ENCODE measurements at regions of chr3 and their contacts with region 1.

Region 1: DNA sequence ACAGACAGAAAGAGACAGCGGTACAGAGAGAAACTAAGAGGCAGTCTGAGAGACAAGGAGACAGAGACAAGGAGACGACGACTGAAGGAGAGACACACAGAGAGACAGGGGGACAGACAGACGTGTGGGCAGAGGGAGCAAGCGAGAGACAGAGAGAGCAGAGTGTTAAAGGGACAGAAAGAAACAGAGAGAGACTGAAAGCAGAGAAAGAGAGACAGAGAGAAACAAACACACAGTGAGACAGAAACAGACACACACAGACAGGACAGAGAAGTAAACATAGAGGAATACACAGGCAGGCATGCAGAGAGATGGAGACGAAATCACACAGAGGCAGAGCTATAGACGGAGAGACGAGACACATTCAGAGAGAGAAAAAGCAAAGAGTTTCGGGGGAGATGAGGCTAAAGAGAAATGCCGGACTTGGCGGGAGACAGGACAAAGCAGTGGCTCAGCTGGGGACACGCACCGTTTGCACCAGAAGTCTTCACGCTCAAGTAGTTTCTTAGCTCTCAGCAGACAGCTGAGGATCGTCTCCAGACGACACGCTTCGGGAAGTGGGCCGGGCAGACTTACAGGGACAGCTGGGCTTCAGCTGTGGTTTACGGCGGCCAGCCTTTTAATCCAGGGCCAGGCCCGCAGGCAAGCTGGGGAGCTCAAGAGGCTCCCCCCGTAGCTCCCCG is 56.0 kb upstream of the DLG1 start:
- DNase-seq: peak; percentile 69 to 89
- ATAC-seq: peak; percentile 59 to 79 (median 68)
- H3K4me3 ChIP-seq: peak overlapping the region; percentile 61
- H3K27ac ChIP-seq: peak overlapping the region; percentile 94
- H3K4me1 ChIP-seq: peaks cover 28% of the 10 kb centered on the region
- H3K27me3 ChIP-seq: no peaks in the 10 kb centered on the region
- CTCF ChIP-seq: no peak

Region 2: GRCh38 chr3:197298341-197298857 is 56.1 kb before region 1 on chr3 and contains the start of gene DLG1:
- intact Hi-C with region 1: loop called in 1 of 2 experiments (anchors 5 kb)
- DNase-seq: peak; percentile 88 to 89
- ATAC-seq: peak; percentile 82 to 88 (median 84)
- H3K4me3 ChIP-seq: peak within 1 kb of the TSS; percentile 99
- H3K27ac ChIP-seq: peak within 1 kb of the TSS; percentile 95
- H3K4me1 ChIP-seq: peaks cover 20% of the 10 kb centered on the region
- H3K27me3 ChIP-seq: no peaks in the 10 kb centered on the region
- CTCF ChIP-seq: no peak
- total RNA-seq, gene DLG1: 51.3 to 57.6 (median 52.8) TPM

Region 3: DNA sequence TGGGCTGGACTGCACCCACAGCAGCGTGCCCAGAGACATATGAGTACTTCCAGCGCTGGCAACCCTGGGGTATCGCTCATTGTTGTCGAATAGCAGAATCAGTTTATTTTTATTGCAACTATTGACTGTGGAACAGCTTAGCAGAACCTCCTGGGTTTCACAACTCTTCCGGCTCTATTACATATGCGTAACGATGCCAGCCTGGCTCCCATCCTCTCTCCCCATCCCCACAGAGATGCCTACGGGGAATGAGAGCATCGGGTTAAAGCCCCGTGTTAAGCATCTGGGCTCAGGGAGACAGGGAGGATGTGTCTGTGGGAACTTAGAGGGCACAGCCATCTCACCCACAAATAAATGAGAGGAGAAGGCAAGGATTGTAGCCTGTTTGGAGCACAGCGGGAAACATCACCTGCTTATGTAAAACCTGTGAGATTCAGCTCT is 20.6 kb after region 1 on chr3:
- intact Hi-C with region 1: loop called in 1 of 2 experiments (anchors 2 kb)
- DNase-seq: no peak
- ATAC-seq: peak; percentile 72 to 82 (median 78)
- H3K4me3 ChIP-seq: no peak overlapping the region
- H3K27ac ChIP-seq: no peak overlapping the region
- H3K4me1 ChIP-seq: no peaks in the 10 kb centered on the region
- H3K27me3 ChIP-seq: no peaks in the 10 kb centered on the region
- CTCF ChIP-seq: no peak

Region 4: DNA sequence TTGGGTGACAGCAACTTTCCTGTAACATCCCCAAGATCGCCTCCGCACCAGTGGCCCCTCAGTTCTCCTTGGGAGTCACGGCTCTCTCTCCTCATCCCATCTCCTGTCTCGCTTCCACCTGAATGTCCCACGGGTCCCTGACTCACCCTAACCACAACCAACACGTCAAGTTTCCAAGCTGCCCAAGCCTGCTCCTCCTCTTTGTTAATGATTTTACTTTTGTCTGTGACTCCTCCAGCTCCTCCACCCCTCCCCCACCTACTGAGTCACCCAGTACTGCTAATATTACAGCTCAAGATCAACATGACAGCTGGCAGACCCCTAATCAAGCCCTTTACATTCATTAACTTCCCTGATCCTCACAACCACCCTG is 162.0 kb after region 1 on chr3:
- intact Hi-C with region 1: no loop called
- DNase-seq: no peak
- ATAC-seq: peak; percentile 67 to 78 (median 73)
- H3K4me3 ChIP-seq: no peak overlapping the region
- H3K27ac ChIP-seq: no peak overlapping the region
- H3K4me1 ChIP-seq: no peaks in the 10 kb centered on the region
- H3K27me3 ChIP-seq: no peaks in the 10 kb centered on the region
- CTCF ChIP-seq: no peak